HepG2 (cell line): ENCODE measurements at regions of chr5 and their contacts with region 1.

Region 1: DNA sequence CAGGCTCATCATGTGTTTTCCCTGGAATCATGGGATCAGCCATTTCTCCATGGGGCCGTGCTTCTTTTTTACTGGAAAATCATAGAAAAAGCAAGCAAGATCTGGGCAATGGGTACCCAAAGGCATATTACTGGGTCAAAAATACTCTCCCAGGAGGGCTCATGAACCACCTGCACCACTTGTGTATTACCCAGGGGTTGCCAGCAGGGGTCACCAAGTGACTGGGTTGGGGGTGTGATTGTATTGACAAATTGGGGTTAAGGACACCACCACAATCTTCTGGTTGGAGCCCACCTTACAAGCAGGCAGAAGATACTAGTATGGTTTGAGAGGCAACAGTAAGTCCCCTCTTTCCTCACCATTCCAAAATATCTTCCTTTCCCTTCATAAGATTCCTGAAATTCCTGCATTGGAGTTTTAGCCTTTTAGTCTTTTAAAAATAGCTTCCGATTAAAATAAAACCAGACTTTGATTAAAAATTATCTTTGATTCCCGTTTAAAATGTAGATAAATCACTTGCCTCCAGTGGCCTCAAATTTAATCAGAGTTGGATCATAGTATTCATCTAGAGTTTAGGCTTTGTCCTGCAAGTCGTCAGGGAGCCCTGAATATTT is 603.3 kb downstream of the KIF4B start:
- DNase-seq: peak; percentile 13
- ATAC-seq: peak; percentile 83
- H3K4me3 ChIP-seq: no peak overlapping the region
- H3K27ac ChIP-seq: no peak overlapping the region
- H3K4me1 ChIP-seq: no peaks in the 10 kb centered on the region
- H3K27me3 ChIP-seq: no peaks in the 10 kb centered on the region
- CTCF ChIP-seq: peak; percentile 72
- EP300 ChIP-seq: no peak
- POLR2A ChIP-seq: no peak
- RAD21 ChIP-seq: peak; percentile 43; the same call in 1 of the 2 replicates

Region 2: GRCh38 chr5:155822177-155822576 is 205.3 kb after region 1 on chr5:
- CTCF ChIA-PET with region 1: no interaction called
- POLR2A ChIA-PET with region 1: no interaction called
- in situ Hi-C with region 1: no loop called
- intact Hi-C with region 1: loop called (anchors 1 kb)
- DNase-seq: no peak
- ATAC-seq: peak; percentile 77
- H3K4me3 ChIP-seq: no peak overlapping the region
- H3K27ac ChIP-seq: no peak overlapping the region
- H3K4me1 ChIP-seq: no peaks in the 10 kb centered on the region
- H3K27me3 ChIP-seq: no peaks in the 10 kb centered on the region
- CTCF ChIP-seq: peak; percentile 35
- EP300 ChIP-seq: no peak
- POLR2A ChIP-seq: no peak
- RAD21 ChIP-seq: no peak